Aorta (tissue), 5 donors: ENCODE measurements at regions of chr7 and their contacts with region 1.

Region 1: DNA sequence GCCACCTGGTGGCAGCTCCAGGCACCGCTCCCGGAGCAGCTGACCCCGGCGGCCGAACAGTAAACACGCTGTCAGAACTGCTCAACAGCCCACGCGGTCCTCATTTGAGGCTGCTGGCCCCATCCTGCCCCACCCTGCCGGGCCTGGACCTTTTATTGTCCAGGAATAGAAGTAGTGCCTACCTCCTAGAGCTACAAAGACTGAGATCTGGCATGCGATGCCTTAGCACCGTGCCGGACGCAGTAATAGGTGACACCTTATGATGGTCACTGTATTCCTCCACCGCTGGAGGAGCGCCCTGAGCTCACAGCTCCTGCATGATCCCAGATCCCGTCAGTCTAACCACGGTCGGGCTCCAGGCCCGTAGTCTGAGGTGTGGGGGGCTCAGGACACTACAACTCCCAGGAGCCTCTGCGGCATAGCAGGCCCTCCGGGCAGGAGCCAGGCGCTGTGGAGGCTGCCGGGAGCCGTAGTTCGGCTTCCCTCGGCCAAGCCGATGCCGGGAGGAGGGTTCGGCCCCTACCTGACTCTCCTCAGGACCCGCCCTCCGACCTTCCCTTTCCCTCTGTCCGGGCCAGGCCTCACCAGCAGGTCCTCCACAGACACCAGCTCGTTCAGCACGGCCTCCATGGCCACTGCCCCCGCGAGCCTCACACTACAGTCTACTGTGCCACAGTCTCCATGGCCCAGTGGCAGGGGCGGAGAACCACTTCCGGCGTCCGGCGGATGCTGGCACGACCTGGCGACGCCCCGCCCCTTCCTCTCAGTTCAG is at the start of gene FIS1:
- DNase-seq: peak; percentile 97 to 98
- ATAC-seq: peak; percentile 99
- H3K4me3 ChIP-seq: peak within 1 kb of the TSS; percentile 74 to 96
- H3K27ac ChIP-seq: peak within 1 kb of the TSS in 1 of 2 donors; percentile 98
- H3K4me1 ChIP-seq: no peaks in the 10 kb centered on the region
- H3K27me3 ChIP-seq: no peaks in the 10 kb centered on the region
- total RNA-seq, gene FIS1: 146 to 155 TPM

Region 2: GRCh38 chr7:101217388-101218235 is 26.9 kb before region 1 on chr7 and contains the starts of genes PLOD3 and ZNHIT1:
- intact Hi-C with region 1: loop called in 1 of 2 experiments (anchors 2 kb)
- DNase-seq: peak; percentile 97 to 99
- ATAC-seq: peak; percentile 91
- H3K4me3 ChIP-seq: peak within 1 kb of the TSS; percentile 52 to 83
- H3K27ac ChIP-seq: peak within 1 kb of the TSS in 1 of 2 donors; percentile 66
- H3K4me1 ChIP-seq: no peaks in the 10 kb centered on the region
- H3K27me3 ChIP-seq: no peaks in the 10 kb centered on the region
- total RNA-seq, gene PLOD3: 51.8 to 70.6 TPM
- total RNA-seq, gene ZNHIT1: 48.7 to 54.4 TPM